ENCODE measurements at regions of chr4 and their contacts with region 1.

Region 1: DNA sequence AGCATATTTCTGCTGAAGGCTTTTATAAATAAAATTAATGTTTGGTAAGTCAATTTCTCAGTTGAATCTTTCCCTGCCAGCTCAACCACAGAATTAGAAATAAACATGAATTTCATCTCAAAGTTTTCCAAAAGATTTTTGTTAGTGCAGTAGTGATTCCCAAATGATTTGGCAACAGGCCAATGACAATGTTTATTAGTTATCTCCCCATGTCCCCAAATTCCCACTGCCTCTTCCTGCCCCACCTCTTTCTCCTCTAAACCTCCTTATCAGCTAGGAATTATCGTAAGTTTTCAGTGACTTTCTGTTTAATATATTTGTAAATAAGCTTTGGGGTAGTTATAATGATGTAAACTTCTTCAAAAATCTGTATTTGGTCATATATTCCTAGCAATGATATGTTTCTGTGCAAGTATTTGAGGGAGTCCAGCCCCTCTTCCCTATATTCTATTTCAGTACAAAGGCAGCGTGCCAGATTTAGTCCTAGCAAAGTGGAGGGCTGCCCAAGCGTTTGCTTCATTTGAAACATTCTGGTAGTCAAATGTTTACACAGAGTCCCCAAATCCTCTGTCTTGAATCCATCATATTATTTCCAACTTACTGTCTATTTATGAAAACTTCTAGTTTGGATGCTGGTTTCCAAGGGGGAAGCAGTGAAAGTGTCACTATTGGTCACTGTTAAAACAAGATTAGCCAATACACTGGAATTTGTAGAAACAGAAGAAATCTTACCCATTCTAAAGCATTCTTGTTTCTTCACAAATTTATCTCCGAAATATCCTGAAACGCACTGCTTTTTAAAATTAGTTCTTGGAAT is 33.7 kb upstream of the ANKRD50 start:
- DNase-seq: no peak
- H3K4me3 ChIP-seq: no peak overlapping the region
- H3K27ac ChIP-seq: no peak overlapping the region
- H3K27me3 ChIP-seq: peaks cover 0 to 3% (median 0%) of the 10 kb centered on the region in 45 donors
- CTCF ChIP-seq: no peak

Region 2: DNA sequence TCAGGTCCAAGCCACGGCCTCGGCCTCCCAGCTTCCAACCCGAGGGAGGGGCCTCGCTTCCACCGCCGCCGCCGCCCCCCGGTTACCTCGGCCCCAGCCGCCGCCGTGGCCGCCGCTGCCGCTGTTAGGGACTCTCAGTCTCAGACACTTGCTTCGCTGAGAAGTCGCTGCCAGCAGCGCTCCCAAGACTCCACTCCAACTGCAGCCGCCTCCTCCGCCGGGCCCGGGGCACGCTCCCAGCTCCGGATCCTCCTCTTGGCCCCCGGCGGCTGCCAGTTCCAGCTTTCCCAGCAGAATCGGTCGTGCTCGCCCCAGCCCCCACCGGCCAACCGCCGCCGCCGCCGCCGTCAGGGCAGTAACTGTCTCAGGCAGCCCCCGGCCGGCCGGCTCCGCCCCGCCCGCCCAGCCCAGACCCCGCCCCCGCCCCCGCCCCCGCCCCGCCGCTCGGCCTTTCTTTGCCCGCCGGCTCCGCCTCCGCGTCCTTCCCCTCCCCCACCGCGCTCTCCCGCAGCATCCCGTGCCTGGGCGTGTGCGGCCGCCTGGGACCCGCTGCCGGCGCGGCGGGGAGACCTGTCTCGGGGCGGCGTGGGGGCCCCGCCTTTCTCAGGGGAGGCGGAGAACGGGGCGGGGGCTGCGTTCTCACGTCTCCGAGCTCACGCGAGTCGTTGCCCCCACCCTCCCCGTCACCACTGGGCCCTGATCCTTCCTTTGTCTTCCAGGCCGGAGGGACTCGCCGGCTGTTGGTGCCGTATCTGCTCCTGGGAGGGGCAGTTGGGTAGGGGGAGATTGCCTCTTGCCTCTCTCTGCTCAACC is 33.6 kb before region 1 on chr4 and contains the start of gene ANKRD50:
- intact Hi-C with region 1: loop called in 1 of 2 experiments (anchors 2 kb)
- DNase-seq: peak; percentile 69 to 88 (median 84)
- H3K4me3 ChIP-seq: peak within 1 kb of the TSS; percentile 66 to 97 (median 88)
- H3K27ac ChIP-seq: peak within 1 kb of the TSS; percentile 81 to 99 (median 97)
- H3K27me3 ChIP-seq: no peaks in the 10 kb centered on the region
- CTCF ChIP-seq: peak in 6 of 56 donors; percentile 3 to 30 (median 16)
- total RNA-seq, gene ANKRD50: 7.7 to 23.1 (median 13.4) TPM